MCF 10A (cell line): ENCODE measurements at regions of chr4 and their contacts with region 1.

Region 1: DNA sequence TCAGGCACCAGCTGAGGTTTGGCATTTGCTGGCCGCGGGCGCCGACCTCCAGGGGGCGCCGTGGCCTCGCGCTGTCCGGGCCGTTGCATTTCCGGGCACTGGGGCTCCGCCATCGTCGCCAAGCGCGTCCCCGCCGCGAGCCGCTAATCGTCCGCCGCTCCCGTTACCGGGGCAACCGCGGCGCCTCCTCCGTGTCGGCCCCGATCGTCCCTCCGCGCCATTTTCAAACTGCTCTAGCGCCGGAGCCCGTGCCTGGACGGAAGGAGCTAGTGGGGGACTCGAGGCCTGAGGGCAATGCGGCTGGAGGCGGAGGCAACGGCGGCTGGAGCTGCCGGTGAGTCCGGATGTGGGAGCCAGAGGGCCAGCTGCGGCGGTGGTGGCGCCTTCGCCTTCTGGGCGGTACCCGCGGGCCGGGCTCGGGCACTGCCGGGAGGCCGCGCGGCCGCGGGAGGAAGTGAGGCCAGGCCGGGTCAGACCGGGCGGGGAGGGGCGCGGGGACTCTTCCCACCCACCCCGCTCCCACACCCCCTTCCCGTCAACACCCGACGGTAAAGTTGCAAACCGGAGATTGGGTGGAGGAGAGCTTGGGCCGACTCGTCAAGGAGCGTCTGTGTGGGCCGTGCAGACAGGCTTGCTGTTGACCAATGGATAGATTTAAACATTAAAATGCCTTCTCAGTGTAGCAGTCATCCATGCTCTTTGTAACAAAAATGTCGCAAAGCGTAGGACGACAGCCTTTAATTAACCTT is at the start of gene CEP135:
- DNase-seq: peak; percentile 90
- H3K4me3 Mint-ChIP-seq: peak within 1 kb of the TSS; percentile 91
- H3K27ac Mint-ChIP-seq: peak within 1 kb of the TSS; percentile 97
- H3K4me1 Mint-ChIP-seq: peaks cover 23% of the 10 kb centered on the region
- H3K27me3 Mint-ChIP-seq: no peaks in the 10 kb centered on the region
- CTCF ChIP-seq: peak; percentile 91
- total RNA-seq, gene CEP135: 12.4 and 14.0 TPM in 2 replicates

Region 2: DNA sequence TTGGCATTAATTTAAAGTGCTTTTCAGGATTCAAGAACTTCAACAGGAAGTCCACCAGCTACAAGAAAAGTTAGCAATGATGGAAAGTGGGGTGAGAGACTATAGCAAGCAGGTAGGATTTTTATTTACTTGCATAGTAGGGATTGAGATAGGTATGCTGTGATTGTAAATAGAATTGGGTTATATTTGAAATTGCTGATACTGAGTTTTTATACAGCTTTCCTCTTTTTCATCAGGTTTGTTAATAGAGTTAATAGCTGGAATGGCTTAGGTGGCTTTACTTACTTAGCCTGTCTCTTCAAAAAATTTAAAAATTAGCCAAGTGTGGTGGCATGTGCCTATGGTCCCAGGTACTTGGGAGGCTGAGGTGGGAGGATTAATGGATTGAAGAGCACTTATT is 10.8 kb after region 1 on chr4:
- CTCF ChIA-PET with region 1: interaction called, 9 read pairs
- POLR2A ChIA-PET with region 1: interaction called, 10 read pairs
- intact Hi-C with region 1: no loop called
- DNase-seq: no peak
- H3K4me3 Mint-ChIP-seq: no peak overlapping the region
- H3K27ac Mint-ChIP-seq: no peak overlapping the region
- H3K4me1 Mint-ChIP-seq: peaks cover 10% of the 10 kb centered on the region
- H3K27me3 Mint-ChIP-seq: no peaks in the 10 kb centered on the region
- CTCF ChIP-seq: no peak

Region 3: GRCh38 chr4:56048702-56049431 is 100.0 kb after region 1 on chr4:
- CTCF ChIA-PET with region 1: interaction called, 4 read pairs
- POLR2A ChIA-PET with region 1: interaction called, 10 read pairs
- intact Hi-C with region 1: loop called (anchors 1 kb)
- DNase-seq: peak; percentile 38
- H3K4me3 Mint-ChIP-seq: peak overlapping the region; percentile 79
- H3K27ac Mint-ChIP-seq: no peak overlapping the region
- H3K4me1 Mint-ChIP-seq: peaks cover 9% of the 10 kb centered on the region
- H3K27me3 Mint-ChIP-seq: peaks cover 11% of the 10 kb centered on the region
- CTCF ChIP-seq: peak; percentile 20